B cell (primary cell): ENCODE measurements at regions of chr4 and their contacts with region 1.

Region 1: GRCh38 chr4:38179690-38180377 is 219.6 kb downstream of the PTTG2 start:
- DNase-seq: peak; percentile 79
- ATAC-seq: peak; percentile 80
- H3K4me3 ChIP-seq: no peak overlapping the region
- H3K4me3 Mint-ChIP-seq: no peak overlapping the region
- H3K27ac ChIP-seq: no peak overlapping the region
- H3K27ac Mint-ChIP-seq: no peak overlapping the region
- H3K4me1 ChIP-seq: peaks cover 24 to 31% of the 10 kb centered on the region in 2 donors
- H3K4me1 Mint-ChIP-seq: peaks cover 29% of the 10 kb centered on the region
- H3K27me3 ChIP-seq: peaks cover 0 to 6% (median 1%) of the 10 kb centered on the region in 4 experiments
- H3K27me3 Mint-ChIP-seq: peaks cover 6% of the 10 kb centered on the region
- CTCF ChIP-seq: peak; percentile 99

Region 2: DNA sequence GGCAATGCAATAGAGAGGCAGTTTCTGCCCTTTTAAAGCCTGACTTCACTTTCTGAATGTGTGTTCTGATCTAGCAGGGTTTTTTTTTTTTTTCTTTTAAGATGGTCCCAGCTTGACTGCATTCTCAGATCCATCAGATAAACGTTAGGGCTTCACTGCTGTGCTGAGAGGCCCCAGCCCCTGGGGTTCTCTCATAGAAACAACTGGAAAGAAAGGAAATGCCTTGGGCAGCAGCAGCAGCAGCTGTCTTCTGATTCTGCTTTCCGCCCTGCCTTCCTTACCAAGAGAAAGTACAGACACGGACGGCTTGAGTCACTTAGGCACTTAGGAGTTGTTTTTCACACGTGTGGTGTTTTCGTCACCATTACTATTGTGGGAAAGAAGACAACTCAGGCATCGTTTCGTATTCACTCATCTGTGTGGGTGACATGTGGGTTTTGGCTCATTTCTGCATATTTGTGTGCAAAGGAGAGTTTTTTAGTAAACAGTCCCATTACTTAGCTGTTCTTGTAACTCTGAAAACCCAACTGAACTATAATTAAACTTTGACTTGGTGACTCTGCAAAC is 47.6 kb before region 1 on chr4:
- CTCF ChIA-PET with region 1: interaction called, 8 read pairs
- POLR2A ChIA-PET with region 1: no interaction called
- intact Hi-C with region 1: loop called (anchors 5 kb)
- DNase-seq: peak; percentile 61
- ATAC-seq: peak; percentile 77
- H3K4me3 ChIP-seq: no peak overlapping the region
- H3K4me3 Mint-ChIP-seq: peak overlapping the region; percentile 48
- H3K27ac ChIP-seq: peak overlapping the region in 1 of 2 donors; percentile 53
- H3K27ac Mint-ChIP-seq: peak overlapping the region; percentile 88
- H3K4me1 ChIP-seq: peaks cover 11 to 28% of the 10 kb centered on the region in 2 donors
- H3K4me1 Mint-ChIP-seq: peaks cover 48% of the 10 kb centered on the region
- H3K27me3 ChIP-seq: no peaks in the 10 kb centered on the region
- H3K27me3 Mint-ChIP-seq: no peaks in the 10 kb centered on the region
- CTCF ChIP-seq: no peak

Region 3: DNA sequence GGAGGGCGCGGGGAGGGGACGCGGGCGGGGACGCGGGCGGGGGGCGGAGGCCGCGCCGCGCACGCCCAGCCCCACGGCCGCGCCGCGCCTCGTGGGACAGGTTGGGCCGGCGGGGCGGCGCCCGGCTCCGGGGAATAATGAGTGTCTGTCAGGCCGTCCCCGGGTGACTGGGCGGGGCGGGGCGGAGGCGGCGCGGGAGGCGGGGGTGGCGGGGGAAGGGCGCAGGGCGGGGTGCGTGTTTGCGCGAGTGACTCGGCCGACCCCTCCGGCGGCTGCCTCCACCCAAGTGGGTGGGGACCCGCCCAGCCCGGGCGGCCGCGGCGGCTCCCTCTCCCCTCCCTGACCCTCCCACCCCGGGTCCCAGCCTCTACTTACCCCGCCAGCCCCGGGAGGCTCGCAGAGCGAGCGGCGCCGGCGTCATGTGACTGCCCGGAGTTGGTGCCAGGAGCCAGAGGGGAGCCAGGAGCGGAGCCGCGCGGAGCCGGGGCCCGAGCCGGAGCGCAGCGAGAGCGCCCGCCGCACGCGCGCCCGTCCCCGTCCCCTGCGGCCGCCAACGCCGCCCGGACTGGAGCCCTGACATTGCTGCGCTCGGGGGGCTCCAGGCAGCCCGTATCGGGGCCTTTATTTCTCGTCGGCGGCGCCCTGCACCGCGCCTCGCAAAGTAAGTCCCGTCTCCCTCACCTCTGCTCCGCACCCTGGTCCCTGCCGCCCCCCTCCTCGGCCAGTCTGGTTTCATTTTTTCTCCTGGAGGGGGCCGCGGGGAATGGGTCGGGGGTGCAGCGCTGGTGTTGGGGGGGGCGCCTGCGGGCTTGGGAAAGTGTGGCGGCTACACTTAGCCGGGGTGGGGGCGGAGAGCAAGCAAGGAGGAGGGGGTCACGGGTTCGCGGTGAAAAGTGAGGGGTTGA is 484.2 kb after region 1 on chr4 and contains the start of gene KLF3:
- CTCF ChIA-PET with region 1: interaction called, 84 read pairs
- POLR2A ChIA-PET with region 1: no interaction called
- intact Hi-C with region 1: no loop called
- DNase-seq: no peak
- ATAC-seq: peak; percentile 79
- H3K4me3 ChIP-seq: peak within 1 kb of the TSS; percentile 80 to 94 (median 83)
- H3K4me3 Mint-ChIP-seq: peak within 1 kb of the TSS; percentile 97
- H3K27ac ChIP-seq: peak within 1 kb of the TSS; percentile 90 to 92
- H3K27ac Mint-ChIP-seq: peak within 1 kb of the TSS; percentile 96
- H3K4me1 ChIP-seq: peaks cover 55 to 61% of the 10 kb centered on the region in 2 donors
- H3K4me1 Mint-ChIP-seq: peaks cover 62% of the 10 kb centered on the region
- H3K27me3 ChIP-seq: no peaks in the 10 kb centered on the region
- H3K27me3 Mint-ChIP-seq: no peaks in the 10 kb centered on the region
- CTCF ChIP-seq: no peak
- total RNA-seq, gene KLF3: 51.9 and 52.8 TPM in 2 replicates

Region 4: DNA sequence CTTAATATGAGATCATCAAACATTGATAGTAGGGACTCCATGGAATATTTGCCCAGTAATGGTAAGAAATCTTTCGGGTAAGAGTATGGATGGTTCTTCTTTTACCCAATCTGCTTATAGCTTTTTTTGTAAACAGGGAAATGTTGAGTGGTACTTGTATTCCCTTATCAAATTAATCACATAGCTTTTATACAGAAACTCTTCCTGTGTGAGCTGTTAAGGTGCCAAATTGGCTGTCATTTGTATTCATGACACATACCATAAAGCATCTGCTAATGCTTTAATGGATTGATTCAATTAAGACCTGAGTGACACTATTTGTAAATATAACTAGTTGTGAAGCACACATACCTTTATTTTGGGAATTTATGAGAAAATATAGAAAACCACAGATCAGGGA is 518.3 kb after region 1 on chr4:
- CTCF ChIA-PET with region 1: interaction called, 17 read pairs
- POLR2A ChIA-PET with region 1: no interaction called
- intact Hi-C with region 1: no loop called
- DNase-seq: no peak
- ATAC-seq: no peak
- H3K4me3 ChIP-seq: no peak overlapping the region
- H3K4me3 Mint-ChIP-seq: no peak overlapping the region
- H3K27ac ChIP-seq: no peak overlapping the region
- H3K27ac Mint-ChIP-seq: no peak overlapping the region
- H3K4me1 ChIP-seq: no peaks in the 10 kb centered on the region
- H3K4me1 Mint-ChIP-seq: peaks cover 3% of the 10 kb centered on the region
- H3K27me3 ChIP-seq: no peaks in the 10 kb centered on the region
- H3K27me3 Mint-ChIP-seq: no peaks in the 10 kb centered on the region
- CTCF ChIP-seq: no peak

Region 5: DNA sequence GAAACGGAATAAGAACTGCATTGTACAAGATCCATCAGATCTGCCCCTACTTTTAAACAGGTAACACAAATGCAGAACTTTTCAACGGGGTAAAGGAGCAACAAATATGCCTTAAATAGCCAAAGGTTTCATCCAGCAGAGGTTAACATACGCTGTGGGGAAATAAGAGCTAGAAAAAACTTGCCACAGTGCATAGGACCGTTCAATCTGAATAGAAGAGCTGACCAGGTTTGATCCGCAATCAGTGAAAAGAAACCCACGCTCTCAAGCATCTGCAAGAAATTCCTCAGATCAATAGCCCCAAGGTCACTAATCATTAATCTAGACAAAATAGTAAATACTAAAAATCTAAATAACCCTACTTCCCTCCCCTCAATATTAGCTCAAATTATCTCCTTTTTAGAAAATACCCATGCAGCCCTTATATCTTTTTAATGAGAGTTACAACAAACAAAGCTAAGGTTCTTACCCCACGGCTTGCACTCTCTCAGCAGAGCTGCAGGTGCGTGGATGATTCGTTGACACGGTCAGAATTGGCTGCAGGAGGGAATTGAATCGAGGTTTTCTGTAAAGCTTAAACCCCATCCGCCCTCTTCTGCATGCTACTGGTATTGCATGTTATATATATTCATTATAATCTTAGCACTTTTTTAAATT is 602.7 kb after region 1 on chr4 and contains the start of gene TLR10:
- CTCF ChIA-PET with region 1: interaction called, 30 read pairs
- POLR2A ChIA-PET with region 1: interaction called, 3 read pairs
- intact Hi-C with region 1: loop called (anchors 1 kb)
- DNase-seq: peak; percentile 88
- ATAC-seq: peak; percentile 90
- H3K4me3 ChIP-seq: peak within 1 kb of the TSS; percentile 50 to 92 (median 72)
- H3K4me3 Mint-ChIP-seq: peak within 1 kb of the TSS; percentile 95
- H3K27ac ChIP-seq: peak within 1 kb of the TSS; percentile 78 to 83
- H3K27ac Mint-ChIP-seq: peak within 1 kb of the TSS; percentile 96
- H3K4me1 ChIP-seq: peaks cover 34 to 51% of the 10 kb centered on the region in 2 donors
- H3K4me1 Mint-ChIP-seq: peaks cover 57% of the 10 kb centered on the region
- H3K27me3 ChIP-seq: no peaks in the 10 kb centered on the region
- H3K27me3 Mint-ChIP-seq: no peaks in the 10 kb centered on the region
- CTCF ChIP-seq: peak; percentile 83
- total RNA-seq, gene TLR10: 51.5 and 53.4 TPM in 2 replicates

Region 6: GRCh38 chr4:38902695-38903094 is 722.9 kb after region 1 on chr4:
- CTCF ChIA-PET with region 1: interaction called, 6 read pairs
- POLR2A ChIA-PET with region 1: no interaction called
- intact Hi-C with region 1: loop called (anchors 5 kb)
- DNase-seq: peak; percentile 67
- ATAC-seq: peak; percentile 73
- H3K4me3 ChIP-seq: no peak overlapping the region
- H3K4me3 Mint-ChIP-seq: no peak overlapping the region
- H3K27ac ChIP-seq: no peak overlapping the region
- H3K27ac Mint-ChIP-seq: no peak overlapping the region
- H3K4me1 ChIP-seq: no peaks in the 10 kb centered on the region
- H3K4me1 Mint-ChIP-seq: peaks cover 6% of the 10 kb centered on the region
- H3K27me3 ChIP-seq: no peaks in the 10 kb centered on the region
- H3K27me3 Mint-ChIP-seq: no peaks in the 10 kb centered on the region
- CTCF ChIP-seq: peak; percentile 73